Activated T-helper 2 cell treated with anti-CD3 and anti-CD28 coated beads, Interferon-gamma antibody, Interleukin-2, Interleukin-4, amounts not matched to agents 10 μg/mL and 5 μg/mL and 100 μg/mL, durations not matched to agents 14 hours and 24 hours and 36 hours (primary cell): ENCODE measurements at regions of chr1 and their contacts with region 1.

Region 1: GRCh38 chr1:66242646-66243547 is 291.1 kb upstream of the SGIP1 start:
- DNase-seq: peak; percentile 61
- H3K4me3 Mint-ChIP-seq: no peak overlapping the region
- H3K27ac Mint-ChIP-seq: no peak overlapping the region
- H3K4me1 Mint-ChIP-seq: peaks cover 27% of the 10 kb centered on the region
- H3K27me3 Mint-ChIP-seq: peaks cover 12% of the 10 kb centered on the region

Region 2: DNA sequence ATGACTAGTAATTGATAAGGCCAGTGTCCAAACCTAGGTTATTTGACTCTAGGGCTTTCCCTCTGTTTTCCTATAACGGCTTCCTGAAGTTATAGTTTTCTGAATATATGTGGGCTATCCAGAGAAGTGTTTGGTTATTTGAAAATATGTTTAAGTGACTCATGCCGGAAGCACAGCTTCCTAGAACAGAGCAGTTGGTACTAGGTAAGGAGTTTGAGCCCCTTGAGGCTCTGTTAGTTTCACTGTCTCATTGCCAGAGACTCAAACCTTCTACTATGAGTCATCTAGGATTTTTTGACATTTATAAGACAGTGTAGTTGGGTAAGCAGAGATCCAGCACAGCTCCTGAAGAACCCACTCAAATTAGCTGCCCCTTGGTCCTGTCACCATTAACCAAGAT is 849.5 kb before region 1 on chr1:
- intact Hi-C with region 1: loop called (anchors 10 kb)
- DNase-seq: peak; percentile 13
- H3K4me3 Mint-ChIP-seq: no peak overlapping the region
- H3K27ac Mint-ChIP-seq: peak overlapping the region; percentile 62
- H3K4me1 Mint-ChIP-seq: peaks cover 80% of the 10 kb centered on the region
- H3K27me3 Mint-ChIP-seq: no peaks in the 10 kb centered on the region

Region 3: GRCh38 chr1:65958561-65959350 is 284.1 kb before region 1 on chr1:
- intact Hi-C with region 1: loop called (anchors 1 kb)
- DNase-seq: no peak
- H3K4me3 Mint-ChIP-seq: no peak overlapping the region
- H3K27ac Mint-ChIP-seq: no peak overlapping the region
- H3K4me1 Mint-ChIP-seq: peaks cover 5% of the 10 kb centered on the region
- H3K27me3 Mint-ChIP-seq: peaks cover 7% of the 10 kb centered on the region

Region 4: DNA sequence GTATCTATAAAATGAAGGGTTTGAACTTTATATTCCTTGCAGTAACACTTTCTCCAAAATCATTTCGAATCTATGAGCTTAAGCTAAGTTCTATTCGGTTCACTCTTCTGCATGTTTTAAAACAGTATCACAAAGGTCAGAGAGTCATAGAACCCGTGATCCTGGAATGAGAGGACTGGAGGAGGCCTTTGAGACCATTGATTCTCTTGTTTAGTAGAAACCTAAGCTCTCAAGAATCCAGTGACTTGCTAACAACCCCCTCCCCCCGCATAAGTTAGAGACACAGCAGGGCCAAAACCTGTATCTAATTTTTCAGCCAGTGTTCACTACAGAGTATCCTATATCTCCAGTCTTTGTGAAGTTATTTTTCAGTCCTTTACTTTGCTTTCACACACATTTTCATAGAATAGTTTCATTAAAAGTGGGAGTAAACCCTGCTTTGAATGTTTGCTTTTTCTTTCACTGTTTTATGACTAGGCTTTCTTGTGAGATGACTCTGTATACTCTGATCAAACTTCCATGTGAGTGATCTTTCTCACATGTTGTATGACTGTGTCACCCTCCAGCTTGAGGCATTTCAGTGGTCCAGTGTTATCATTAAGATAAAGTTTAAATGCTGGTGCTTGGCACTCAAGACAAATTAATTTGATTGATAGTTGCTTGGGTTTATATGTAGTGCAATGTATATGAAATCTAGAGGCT is 15.7 kb after region 1 on chr1:
- intact Hi-C with region 1: loop called (anchors 2 kb)
- DNase-seq: no peak
- H3K4me3 Mint-ChIP-seq: no peak overlapping the region
- H3K27ac Mint-ChIP-seq: no peak overlapping the region
- H3K4me1 Mint-ChIP-seq: peaks cover 52% of the 10 kb centered on the region
- H3K27me3 Mint-ChIP-seq: peaks cover 7% of the 10 kb centered on the region

Region 5: GRCh38 chr1:66446261-66447001 is 203.5 kb after region 1 on chr1:
- intact Hi-C with region 1: loop called (anchors 1 kb)
- DNase-seq: peak; percentile 12
- H3K4me3 Mint-ChIP-seq: peak overlapping the region; percentile 1
- H3K27ac Mint-ChIP-seq: peak overlapping the region; percentile 96
- H3K4me1 Mint-ChIP-seq: peaks cover 28% of the 10 kb centered on the region
- H3K27me3 Mint-ChIP-seq: peaks cover 23% of the 10 kb centered on the region